IMR-90 (cell line): ENCODE measurements at regions of chr15 and their contacts with region 1.

Region 1: GRCh38 chr15:36008719-36009118 is 462.8 kb upstream of the DPH6 start:
- DNase-seq: no peak
- ATAC-seq: no peak
- H3K4me3 ChIP-seq: no peak overlapping the region
- H3K27ac ChIP-seq: no peak overlapping the region
- H3K4me1 ChIP-seq: no peaks in the 10 kb centered on the region
- H3K27me3 ChIP-seq: no peaks in the 10 kb centered on the region
- CTCF ChIP-seq: no peak
- POLR2A ChIP-seq: no peak
- RAD21 ChIP-seq: no peak

Region 2: DNA sequence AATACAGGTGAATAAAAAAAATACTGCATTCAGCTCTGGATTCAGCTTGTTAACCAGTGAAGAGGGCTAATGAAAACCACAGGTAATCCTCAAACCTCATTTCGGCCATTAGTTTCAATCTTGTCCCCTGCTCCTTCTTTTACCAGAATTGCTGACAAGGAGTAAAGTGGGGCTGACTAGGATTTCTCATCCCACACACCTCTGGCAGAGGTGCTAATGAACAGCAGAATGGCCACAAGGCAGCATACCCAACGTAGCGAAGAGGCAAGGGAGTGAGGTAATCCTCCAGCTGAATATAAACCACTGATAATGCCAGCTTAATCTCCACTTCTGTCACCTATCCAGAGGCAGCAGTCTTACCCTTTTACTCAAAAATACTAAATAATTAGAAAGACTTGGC is 321.9 kb after region 1 on chr15:
- CTCF ChIA-PET with region 1: no interaction called
- POLR2A ChIA-PET with region 1: interaction called, 16 read pairs
- dilution Hi-C with region 1: no loop called
- in situ Hi-C with region 1: no loop called
- intact Hi-C with region 1: no loop called
- DNase-seq: no peak
- ATAC-seq: no peak
- H3K4me3 ChIP-seq: no peak overlapping the region
- H3K27ac ChIP-seq: no peak overlapping the region
- H3K4me1 ChIP-seq: peaks cover 6% of the 10 kb centered on the region; the same call in 1 of the 2 replicates
- H3K27me3 ChIP-seq: no peaks in the 10 kb centered on the region
- CTCF ChIP-seq: no peak
- POLR2A ChIP-seq: no peak
- RAD21 ChIP-seq: no peak